IMR-90 (cell line): ENCODE measurements at regions of chr12 and their contacts with region 1.

Region 1: GRCh38 chr12:29769162-29769858 is 14.4 kb downstream of the TMTC1 start:
- DNase-seq: peak; percentile 94
- ATAC-seq: peak; percentile 81
- H3K4me3 ChIP-seq: no peak overlapping the region
- H3K27ac ChIP-seq: peak overlapping the region; percentile 51; the same call in 1 of the 2 replicates
- H3K4me1 ChIP-seq: peaks cover 15% of the 10 kb centered on the region
- H3K27me3 ChIP-seq: no peaks in the 10 kb centered on the region
- CTCF ChIP-seq: no peak
- POLR2A ChIP-seq: no peak
- RAD21 ChIP-seq: no peak

Region 2: GRCh38 chr12:29756741-29757390 is 12.4 kb before region 1 on chr12:
- CTCF ChIA-PET with region 1: interaction called, 3 read pairs
- POLR2A ChIA-PET with region 1: no interaction called
- dilution Hi-C with region 1: no loop called
- in situ Hi-C with region 1: no loop called
- intact Hi-C with region 1: loop called (anchors 1 kb)
- DNase-seq: peak; percentile 35
- ATAC-seq: peak; percentile 40; the same call in 1 of the 2 replicates
- H3K4me3 ChIP-seq: no peak overlapping the region
- H3K27ac ChIP-seq: peak overlapping the region; percentile 37; the same call in 1 of the 2 replicates
- H3K4me1 ChIP-seq: peaks cover 9% of the 10 kb centered on the region
- H3K27me3 ChIP-seq: no peaks in the 10 kb centered on the region
- CTCF ChIP-seq: no peak
- POLR2A ChIP-seq: no peak
- RAD21 ChIP-seq: no peak

Region 3: DNA sequence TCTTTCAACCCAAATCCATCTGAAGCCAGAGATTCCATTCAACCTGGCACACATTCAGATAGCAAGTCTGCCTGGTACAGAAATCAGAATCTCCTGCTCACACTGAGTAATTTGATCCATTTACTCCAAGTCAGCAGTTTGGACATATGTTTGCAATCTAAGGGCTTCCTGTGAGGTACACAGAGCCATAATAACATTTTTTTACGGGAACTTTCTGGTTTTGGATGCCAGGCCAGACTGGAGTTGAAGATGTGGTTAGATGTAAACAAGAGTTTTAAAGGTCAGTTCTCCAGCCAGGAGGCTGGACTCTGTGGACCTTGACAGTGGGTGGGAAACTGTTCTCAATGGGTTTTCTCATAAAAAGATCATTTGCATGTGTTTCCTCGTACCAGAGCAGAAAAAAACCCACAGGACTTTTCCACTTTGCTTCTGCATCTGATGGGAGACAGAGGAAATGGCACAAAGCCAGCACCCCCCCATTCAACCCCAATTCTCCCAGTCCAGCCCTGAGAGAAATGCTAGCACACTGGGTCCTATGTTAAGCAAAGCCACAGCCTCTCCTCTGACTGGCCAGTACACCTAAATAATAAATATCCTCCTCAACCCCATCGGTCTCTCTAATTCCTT is 1139.5 kb after region 1 on chr12:
- CTCF ChIA-PET with region 1: no interaction called
- POLR2A ChIA-PET with region 1: no interaction called
- dilution Hi-C with region 1: no loop called
- in situ Hi-C with region 1: no loop called
- intact Hi-C with region 1: no loop called
- DNase-seq: peak; percentile 45
- ATAC-seq: peak; percentile 77
- H3K4me3 ChIP-seq: no peak overlapping the region
- H3K27ac ChIP-seq: no peak overlapping the region
- H3K4me1 ChIP-seq: peaks cover 4% of the 10 kb centered on the region; the same call in 1 of the 2 replicates
- H3K27me3 ChIP-seq: peaks cover 5% of the 10 kb centered on the region; the same call in 1 of the 2 replicates
- CTCF ChIP-seq: no peak
- POLR2A ChIP-seq: no peak
- RAD21 ChIP-seq: no peak